ENCODE measurements at regions of chr22 and their contacts with region 1.

Region 1: GRCh38 chr22:37658133-37659065 is at the start of gene PDXP:
- DNase-seq: peak; percentile 98
- ATAC-seq: peak; percentile 96
- H3K4me3 ChIP-seq: peak within 1 kb of the TSS; percentile 88
- H3K27ac ChIP-seq: 0 out of 2 replicates have a peak within 1 kb of the TSS, but pooled peaks have one; percentile 6
- H3K4me1 ChIP-seq: peaks cover 26% of the 10 kb centered on the region
- H3K27me3 ChIP-seq: no peaks in the 10 kb centered on the region
- CTCF ChIP-seq: no peak
- total RNA-seq, gene PDXP: 36.9 and 51.3 TPM in 2 replicates

Region 2: DNA sequence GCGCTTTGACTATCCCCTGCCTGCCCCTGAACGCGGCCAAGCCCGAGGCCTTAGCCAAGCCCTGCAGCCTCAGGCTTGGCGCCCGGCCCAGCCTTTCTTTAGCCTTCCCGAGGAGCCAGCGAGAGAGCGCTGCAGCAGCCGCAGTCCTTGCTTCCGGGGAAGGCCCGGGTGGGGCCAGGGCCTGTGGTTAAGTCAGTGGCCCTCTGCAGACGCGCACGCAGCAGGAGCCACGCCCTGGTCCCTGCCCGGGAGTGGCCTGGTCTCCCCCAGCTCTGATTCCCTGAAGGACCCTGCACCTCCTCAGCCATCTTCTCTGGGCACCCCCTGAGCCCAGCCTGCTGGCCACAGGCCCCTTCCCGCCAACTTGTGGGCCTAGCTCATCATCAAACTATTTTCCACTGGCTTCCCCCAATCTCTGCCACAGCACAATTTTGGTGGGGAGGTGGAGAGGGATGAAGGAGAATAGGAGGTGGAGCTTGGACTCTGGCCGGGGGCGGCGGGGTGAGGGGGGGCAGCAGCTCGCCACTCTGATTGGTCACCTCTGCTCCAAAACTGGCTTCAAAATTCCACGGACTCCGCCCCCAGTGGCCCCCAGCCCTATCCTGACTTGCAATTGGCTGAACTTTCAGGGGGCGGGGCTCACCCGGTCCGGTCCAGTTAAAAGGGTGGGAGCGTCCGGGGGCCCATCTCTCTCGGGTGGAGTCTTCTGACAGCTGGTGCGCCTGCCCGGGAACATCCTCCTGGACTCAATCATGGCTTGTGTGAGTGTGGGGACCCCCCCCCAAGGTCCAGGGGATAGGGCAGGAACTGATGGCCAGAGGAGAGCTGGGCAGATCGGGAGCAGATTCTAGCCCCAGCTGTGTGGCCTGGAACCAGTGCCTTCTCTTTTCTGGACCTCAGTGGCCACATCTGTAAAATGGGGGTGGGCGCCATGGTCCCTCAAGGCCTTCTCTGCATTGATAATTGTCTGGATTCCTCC is 16.8 kb after region 1 on chr22 and contains the start of gene LGALS1:
- CTCF ChIA-PET with region 1: interaction called, 4 read pairs
- POLR2A ChIA-PET with region 1: interaction called, 8 read pairs
- intact Hi-C with region 1: loop called (anchors 2 kb)
- DNase-seq: peak; percentile 95
- ATAC-seq: peak; percentile 84
- H3K4me3 ChIP-seq: peak within 1 kb of the TSS; percentile 85
- H3K27ac ChIP-seq: peak within 1 kb of the TSS; percentile 93
- H3K4me1 ChIP-seq: peaks cover 11% of the 10 kb centered on the region
- H3K27me3 ChIP-seq: no peaks in the 10 kb centered on the region
- CTCF ChIP-seq: no peak
- total RNA-seq, gene LGALS1: 1,612 and 2,325 TPM in 2 replicates

Region 3: GRCh38 chr22:37824674-37825641 is 166.6 kb after region 1 on chr22:
- CTCF ChIA-PET with region 1: no interaction called
- POLR2A ChIA-PET with region 1: no interaction called
- intact Hi-C with region 1: no loop called
- DNase-seq: no peak
- ATAC-seq: no peak
- H3K4me3 ChIP-seq: no peak overlapping the region
- H3K27ac ChIP-seq: no peak overlapping the region
- H3K4me1 ChIP-seq: no peaks in the 10 kb centered on the region
- H3K27me3 ChIP-seq: no peaks in the 10 kb centered on the region
- CTCF ChIP-seq: no peak

Measured in PC-3 (cell line).